ENCODE measurements at regions of chr2 and their contacts with region 1.

Region 1: GRCh38 chr2:54522624-54523281 is 66.6 kb downstream of the SPTBN1 start:
- DNase-seq: peak; percentile 48 to 90 (median 59)
- ATAC-seq: peak; percentile 100
- H3K4me3 ChIP-seq: no peak overlapping the region
- H3K4me3 Mint-ChIP-seq: no peak overlapping the region
- H3K27ac ChIP-seq: no peak overlapping the region
- H3K27ac Mint-ChIP-seq: no peak overlapping the region
- H3K4me1 ChIP-seq: peaks cover 3% of the 10 kb centered on the region
- H3K4me1 Mint-ChIP-seq: peaks cover 5% of the 10 kb centered on the region
- H3K27me3 ChIP-seq: no peaks in the 10 kb centered on the region
- H3K27me3 Mint-ChIP-seq: no peaks in the 10 kb centered on the region
- CTCF ChIP-seq: peak; percentile 77

Region 2: GRCh38 chr2:54558188-54559005 is 35.6 kb after region 1 on chr2:
- CTCF ChIA-PET with region 1: interaction called, 4 read pairs
- POLR2A ChIA-PET with region 1: interaction called, 7 read pairs
- intact Hi-C with region 1: loop called (anchors 2 kb)
- DNase-seq: peak; percentile 35 to 88 (median 62)
- ATAC-seq: peak; percentile 66
- H3K4me3 ChIP-seq: peak overlapping the region; percentile 72
- H3K4me3 Mint-ChIP-seq: peak overlapping the region; percentile 98
- H3K27ac ChIP-seq: peak overlapping the region; percentile 75 to 89
- H3K27ac Mint-ChIP-seq: peak overlapping the region; percentile 95
- H3K4me1 ChIP-seq: peaks cover 30% of the 10 kb centered on the region
- H3K4me1 Mint-ChIP-seq: peaks cover 72% of the 10 kb centered on the region
- H3K27me3 ChIP-seq: no peaks in the 10 kb centered on the region
- H3K27me3 Mint-ChIP-seq: no peaks in the 10 kb centered on the region
- CTCF ChIP-seq: no peak

Region 3: DNA sequence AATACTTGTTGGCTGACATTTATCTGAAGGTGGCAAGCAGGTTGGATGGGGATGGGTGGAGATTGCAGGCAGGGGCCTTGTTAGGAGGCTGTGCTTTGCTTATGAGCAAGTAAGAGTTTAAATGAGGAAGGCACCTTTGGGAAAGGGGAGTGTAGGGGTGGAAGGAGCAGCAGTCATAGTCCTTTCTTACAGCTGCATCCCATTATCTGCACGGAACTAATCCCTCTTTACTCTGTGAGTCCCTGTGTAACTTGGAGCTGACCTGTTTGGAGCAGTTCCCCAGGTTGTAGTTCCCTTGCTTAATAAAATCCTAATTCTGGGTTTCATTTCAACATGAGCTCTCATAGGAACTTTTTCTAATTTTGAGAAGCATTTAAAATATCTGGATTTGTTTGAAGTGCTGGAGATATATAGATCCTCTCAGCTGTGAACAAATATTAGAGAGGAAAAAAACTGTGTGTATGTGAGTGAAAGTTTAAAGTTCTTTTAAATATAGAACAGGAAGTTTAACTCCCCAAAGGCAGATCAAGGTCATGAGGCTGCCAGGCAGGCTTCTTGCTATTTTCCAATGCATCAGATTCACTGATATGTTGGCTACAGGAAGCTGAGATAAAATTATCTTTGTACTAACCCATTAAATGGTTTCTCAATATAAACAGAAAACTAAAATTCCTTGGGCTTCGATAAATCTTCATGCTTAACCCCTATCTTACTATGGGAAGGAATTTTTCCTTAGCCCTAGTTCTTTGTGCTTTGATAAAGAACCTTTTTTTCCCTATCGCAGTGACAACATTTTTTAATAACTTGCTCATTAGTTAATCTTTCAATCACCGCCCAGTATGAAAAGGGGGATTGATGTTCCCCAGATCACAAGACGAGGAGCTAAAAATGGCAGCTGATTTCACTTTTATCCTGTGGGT is 96.2 kb after region 1 on chr2:
- CTCF ChIA-PET with region 1: interaction called, 11 read pairs
- POLR2A ChIA-PET with region 1: no interaction called
- intact Hi-C with region 1: no loop called
- DNase-seq: peak in 1 of 14 experiments; percentile 29
- ATAC-seq: no peak
- H3K4me3 ChIP-seq: no peak overlapping the region
- H3K4me3 Mint-ChIP-seq: peak overlapping the region; percentile 6
- H3K27ac ChIP-seq: no peak overlapping the region
- H3K27ac Mint-ChIP-seq: peak overlapping the region; percentile 68
- H3K4me1 ChIP-seq: peaks cover 7% of the 10 kb centered on the region
- H3K4me1 Mint-ChIP-seq: peaks cover 50% of the 10 kb centered on the region
- H3K27me3 ChIP-seq: no peaks in the 10 kb centered on the region
- H3K27me3 Mint-ChIP-seq: no peaks in the 10 kb centered on the region
- CTCF ChIP-seq: no peak

Region 4: GRCh38 chr2:54657664-54658083 is 134.9 kb after region 1 on chr2:
- CTCF ChIA-PET with region 1: interaction called, 3 read pairs
- POLR2A ChIA-PET with region 1: no interaction called
- intact Hi-C with region 1: loop called in 1 of 2 experiments (anchors 2 kb)
- DNase-seq: peak in 5 of 14 experiments; percentile 12 to 49 (median 39)
- ATAC-seq: peak; percentile 49
- H3K4me3 ChIP-seq: no peak overlapping the region
- H3K4me3 Mint-ChIP-seq: no peak overlapping the region
- H3K27ac ChIP-seq: no peak overlapping the region
- H3K27ac Mint-ChIP-seq: peak overlapping the region; percentile 61
- H3K4me1 ChIP-seq: no peaks in the 10 kb centered on the region
- H3K4me1 Mint-ChIP-seq: no peaks in the 10 kb centered on the region
- H3K27me3 ChIP-seq: no peaks in the 10 kb centered on the region
- H3K27me3 Mint-ChIP-seq: no peaks in the 10 kb centered on the region
- CTCF ChIP-seq: peak; percentile 55

Region 5: GRCh38 chr2:54704688-54705605 is 182.2 kb after region 1 on chr2:
- CTCF ChIA-PET with region 1: interaction called, 43 read pairs
- POLR2A ChIA-PET with region 1: interaction called, 9 read pairs
- intact Hi-C with region 1: loop called (anchors 1 kb)
- DNase-seq: peak in 3 of 14 experiments; percentile 73 to 78 (median 78)
- ATAC-seq: peak; percentile 72
- H3K4me3 ChIP-seq: no peak overlapping the region
- H3K4me3 Mint-ChIP-seq: no peak overlapping the region
- H3K27ac ChIP-seq: no peak overlapping the region
- H3K27ac Mint-ChIP-seq: no peak overlapping the region
- H3K4me1 ChIP-seq: peaks cover 12% of the 10 kb centered on the region
- H3K4me1 Mint-ChIP-seq: no peaks in the 10 kb centered on the region
- H3K27me3 ChIP-seq: peaks cover 17 to 23% of the 10 kb centered on the region in 2 experiments
- H3K27me3 Mint-ChIP-seq: peaks cover 16% of the 10 kb centered on the region
- CTCF ChIP-seq: peak; percentile 77

Region 6: DNA sequence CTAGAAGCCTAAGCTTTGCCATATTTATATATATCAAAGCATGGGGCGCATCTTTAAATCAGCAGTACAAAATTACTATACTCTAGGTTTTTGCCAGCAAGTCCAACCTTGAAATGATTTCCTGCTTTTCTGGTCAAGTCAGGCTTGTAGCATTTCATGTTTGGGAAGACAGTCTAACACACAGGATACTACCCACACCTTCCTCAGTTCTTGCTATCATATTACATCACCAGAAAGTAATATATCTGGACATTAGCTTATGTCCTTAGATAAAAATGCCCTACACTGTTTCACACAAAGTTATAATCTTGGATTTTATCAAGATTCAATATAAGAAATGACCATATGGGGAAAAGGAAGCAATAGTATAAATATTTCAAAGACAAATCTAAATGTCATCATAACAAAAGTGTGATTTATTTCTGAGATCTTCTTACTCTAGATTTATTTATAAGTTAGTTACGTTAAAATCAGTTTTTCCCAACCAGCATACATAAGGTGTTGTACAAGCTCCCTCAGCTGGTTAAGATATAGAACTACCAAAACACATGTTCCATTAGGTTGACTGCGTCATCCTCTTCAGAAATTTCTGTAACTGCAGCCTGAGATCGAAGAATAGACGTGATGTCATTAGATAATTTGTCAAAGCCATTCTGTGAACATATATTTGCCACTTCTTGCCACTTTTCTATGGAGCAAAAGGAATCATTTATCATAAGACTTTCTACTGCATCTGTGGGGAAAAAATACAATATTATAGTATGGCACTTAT is 652.7 kb after region 1 on chr2:
- CTCF ChIA-PET with region 1: no interaction called
- POLR2A ChIA-PET with region 1: no interaction called
- intact Hi-C with region 1: loop called (anchors 2 to 5 kb)
- DNase-seq: peak in 3 of 14 experiments; percentile 64 to 76 (median 71)
- ATAC-seq: peak; percentile 99
- H3K4me3 ChIP-seq: no peak overlapping the region
- H3K4me3 Mint-ChIP-seq: no peak overlapping the region
- H3K27ac ChIP-seq: no peak overlapping the region
- H3K27ac Mint-ChIP-seq: no peak overlapping the region
- H3K4me1 ChIP-seq: no peaks in the 10 kb centered on the region
- H3K4me1 Mint-ChIP-seq: peaks cover 10% of the 10 kb centered on the region
- H3K27me3 ChIP-seq: no peaks in the 10 kb centered on the region
- H3K27me3 Mint-ChIP-seq: no peaks in the 10 kb centered on the region
- CTCF ChIP-seq: peak; percentile 59

Measured in CD4-positive, alpha-beta T cell (primary cell).